ENCODE measurements at regions of chr3 and their contacts with region 1.

Region 1: GRCh38 chr3:67995206-67995605 is 340.8 kb upstream of the SUCLG2 start:
- DNase-seq: no peak
- H3K4me3 ChIP-seq: no peak overlapping the region
- H3K27ac ChIP-seq: no peak overlapping the region
- H3K4me1 ChIP-seq: no peaks in the 10 kb centered on the region
- H3K27me3 ChIP-seq: no peaks in the 10 kb centered on the region
- CTCF ChIP-seq: no peak

Region 2: GRCh38 chr3:67976663-67977062 is 18.5 kb before region 1 on chr3:
- intact Hi-C with region 1: loop called (anchors 1 kb)
- DNase-seq: no peak
- H3K4me3 ChIP-seq: no peak overlapping the region
- H3K27ac ChIP-seq: no peak overlapping the region
- H3K4me1 ChIP-seq: no peaks in the 10 kb centered on the region
- H3K27me3 ChIP-seq: no peaks in the 10 kb centered on the region
- CTCF ChIP-seq: no peak

Measured in tibial artery (tissue), 4 donors.